Activated CD4-positive, alpha-beta memory T cell treated with anti-CD3 and anti-CD28 coated beads for 36 hours (primary cell): ENCODE measurements at regions of chr12 and their contacts with region 1.

Region 1: DNA sequence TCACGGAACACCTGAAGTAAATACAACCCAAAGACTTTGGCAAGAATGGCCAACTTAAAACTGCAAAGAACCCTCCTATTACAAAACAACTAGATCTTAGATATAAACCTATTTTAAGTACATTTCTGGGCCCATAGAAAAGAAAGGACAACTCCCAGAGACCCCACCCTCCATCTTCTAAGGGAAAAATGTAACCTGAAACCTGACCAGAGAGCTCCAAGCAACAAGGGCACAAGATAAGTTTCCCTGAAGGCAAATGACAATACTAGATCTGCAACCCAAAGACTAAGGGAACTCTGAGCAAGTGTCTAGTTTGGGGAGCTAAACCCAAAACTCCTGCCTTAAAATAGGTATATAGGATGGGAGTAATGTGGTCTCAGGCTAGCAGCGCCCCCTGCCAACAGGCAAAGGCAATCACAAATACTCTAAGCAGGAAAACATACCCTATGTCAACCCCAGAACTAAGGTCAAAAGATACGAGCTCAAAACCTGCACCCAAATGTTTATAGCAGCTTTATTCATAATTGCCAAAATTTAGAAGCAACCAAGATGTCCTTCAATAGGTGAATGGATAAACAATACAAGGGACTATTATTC is 218.9 kb downstream of the ITPR2 start:
- DNase-seq: peak; percentile 40
- H3K4me3 Mint-ChIP-seq: no peak overlapping the region
- H3K27ac Mint-ChIP-seq: no peak overlapping the region
- H3K4me1 Mint-ChIP-seq: no peaks in the 10 kb centered on the region
- H3K27me3 Mint-ChIP-seq: no peaks in the 10 kb centered on the region

Region 2: GRCh38 chr12:26119391-26119981 is 494.6 kb before region 1 on chr12:
- CTCF ChIA-PET with region 1: interaction called, 3 read pairs
- POLR2A ChIA-PET with region 1: no interaction called
- intact Hi-C with region 1: loop called (anchors 1 kb)
- DNase-seq: no peak
- H3K4me3 Mint-ChIP-seq: no peak overlapping the region
- H3K27ac Mint-ChIP-seq: no peak overlapping the region
- H3K4me1 Mint-ChIP-seq: peaks cover 22% of the 10 kb centered on the region
- H3K27me3 Mint-ChIP-seq: peaks cover 61% of the 10 kb centered on the region

Region 3: GRCh38 chr12:26976687-26977086 is 362.6 kb after region 1 on chr12:
- CTCF ChIA-PET with region 1: no interaction called
- POLR2A ChIA-PET with region 1: no interaction called
- intact Hi-C with region 1: no loop called
- DNase-seq: no peak
- H3K4me3 Mint-ChIP-seq: no peak overlapping the region
- H3K27ac Mint-ChIP-seq: no peak overlapping the region
- H3K4me1 Mint-ChIP-seq: peaks cover 9% of the 10 kb centered on the region
- H3K27me3 Mint-ChIP-seq: no peaks in the 10 kb centered on the region